Activated T-helper 1 cell treated with anti-CD3 and anti-CD28 coated beads, Interleukin-12 subunit alpha, Interleukin-12 subunit beta, Interleukin-2, Interleukin-4 antibody, amounts not matched to agents 30 ng/mL and 10 ng/mL and 1 ng/mL, durations not matched to agents 14 hours and 24 hours and 36 hours (primary cell): ENCODE measurements at regions of chr3 and their contacts with region 1.

Region 1: DNA sequence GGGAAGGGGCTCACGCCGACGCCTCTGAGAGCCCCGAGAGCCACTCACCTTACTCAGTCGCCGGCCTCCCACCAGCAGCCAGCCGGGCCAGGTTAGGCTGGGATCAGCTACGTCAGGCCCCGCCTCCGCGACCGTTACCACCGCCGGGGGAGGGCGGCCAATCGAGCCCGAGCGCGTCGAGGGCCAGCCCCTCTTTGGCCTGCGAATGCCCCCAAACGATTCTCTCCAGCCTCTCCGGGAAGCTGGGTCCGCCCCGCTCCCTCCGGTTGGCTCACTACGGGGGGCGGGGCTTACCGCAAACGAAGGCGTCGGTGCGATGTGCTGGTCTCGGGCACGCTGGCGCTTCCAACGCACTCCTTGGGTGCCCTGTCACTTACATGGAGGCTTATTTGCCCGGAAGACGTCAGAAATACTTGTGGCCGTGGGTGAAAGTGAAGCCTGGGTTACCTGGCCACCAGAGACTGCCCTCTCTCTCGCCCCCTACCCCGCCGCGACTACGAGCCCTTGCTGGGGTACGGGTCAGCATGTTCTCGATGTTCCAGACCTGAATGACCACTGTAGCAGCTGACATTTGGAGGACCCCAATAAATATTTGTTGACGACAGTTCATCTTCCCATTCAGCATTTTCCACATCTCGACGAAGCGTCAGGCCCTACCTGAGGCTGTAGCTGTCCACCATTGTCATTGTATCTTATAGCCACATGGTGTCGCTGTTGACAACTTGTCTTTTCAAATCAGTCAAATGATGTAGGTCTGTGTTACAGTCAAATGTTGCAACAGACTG is at the start of gene CEP70:
- DNase-seq: peak; percentile 79
- H3K4me3 Mint-ChIP-seq: peak within 1 kb of the TSS; percentile 87
- H3K27ac Mint-ChIP-seq: peak within 1 kb of the TSS; percentile 86
- H3K4me1 Mint-ChIP-seq: peaks cover 11% of the 10 kb centered on the region
- H3K27me3 Mint-ChIP-seq: peaks cover 3% of the 10 kb centered on the region
- total RNA-seq, gene CEP70: 2.4 and 3.1 TPM in 2 replicates

Region 2: DNA sequence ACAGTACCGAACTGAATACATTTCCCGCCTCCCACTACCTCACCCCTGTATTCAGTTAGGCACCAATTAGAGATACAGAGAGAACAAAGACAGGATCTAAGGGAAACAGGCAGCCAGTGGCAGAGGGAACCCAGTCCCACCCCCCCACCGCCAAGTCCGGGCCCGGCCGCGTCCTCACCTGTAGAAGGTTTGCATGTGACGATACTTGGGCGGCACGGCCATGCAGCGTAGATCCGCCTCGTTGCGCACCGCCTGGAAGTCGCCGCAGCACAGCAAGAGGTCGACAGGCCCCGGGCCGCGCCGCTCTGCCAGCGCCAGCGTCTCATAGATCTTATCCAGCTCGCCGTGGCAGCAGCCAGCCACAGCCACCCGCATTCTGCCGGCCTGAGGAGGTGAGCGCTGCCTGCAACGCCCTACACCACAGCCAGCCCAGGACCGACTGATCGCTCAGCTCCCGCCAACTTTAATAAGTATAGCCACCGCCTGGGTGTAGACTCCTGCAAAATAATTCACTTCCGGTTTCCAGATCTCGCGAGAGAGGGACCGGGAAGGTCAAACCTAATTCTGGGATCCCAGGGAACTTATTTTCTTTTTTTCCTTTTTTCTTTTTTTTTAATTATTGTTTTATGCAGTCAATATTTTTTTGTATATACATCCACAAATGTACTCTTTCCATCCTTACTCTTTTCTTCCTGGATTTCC is 419.8 kb before region 1 on chr3 and contains the start of gene DBR1:
- intact Hi-C with region 1: loop called (anchors 5 kb)
- DNase-seq: peak; percentile 68
- H3K4me3 Mint-ChIP-seq: peak within 1 kb of the TSS; percentile 98
- H3K27ac Mint-ChIP-seq: peak within 1 kb of the TSS; percentile 94
- H3K4me1 Mint-ChIP-seq: peaks cover 42% of the 10 kb centered on the region
- H3K27me3 Mint-ChIP-seq: peaks cover 7% of the 10 kb centered on the region
- total RNA-seq, gene DBR1: 25.7 and 31.0 TPM in 2 replicates

Region 3: DNA sequence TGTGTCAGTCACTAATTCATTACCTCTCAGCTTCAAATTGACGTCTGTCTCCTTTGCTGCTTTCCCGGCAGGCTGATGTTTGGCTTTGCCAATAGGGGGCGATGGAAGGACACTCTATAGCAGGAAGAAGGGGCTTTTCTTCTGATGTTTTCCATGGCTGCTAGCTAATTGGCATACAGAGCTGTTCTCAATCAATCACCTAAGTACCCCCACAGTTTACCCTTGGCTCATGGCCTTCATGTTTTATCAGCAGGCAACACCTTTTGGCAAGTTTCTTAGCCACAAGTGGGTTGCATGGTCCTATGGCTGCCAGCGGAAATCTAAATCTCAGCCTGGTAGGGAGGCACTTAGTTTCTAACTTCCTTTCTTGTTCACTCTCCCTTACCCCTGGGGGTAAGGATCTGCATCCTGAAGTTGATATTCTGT is 114.9 kb before region 1 on chr3:
- intact Hi-C with region 1: loop called (anchors 5 kb)
- DNase-seq: no peak
- H3K4me3 Mint-ChIP-seq: no peak overlapping the region
- H3K27ac Mint-ChIP-seq: no peak overlapping the region
- H3K4me1 Mint-ChIP-seq: no peaks in the 10 kb centered on the region
- H3K27me3 Mint-ChIP-seq: peaks cover 10% of the 10 kb centered on the region

Region 4: GRCh38 chr3:138608322-138609135 is 14.2 kb after region 1 on chr3 and contains the start of gene FAIM:
- intact Hi-C with region 1: loop called (anchors 1 kb)
- DNase-seq: peak; percentile 46
- H3K4me3 Mint-ChIP-seq: peak within 1 kb of the TSS; percentile 89
- H3K27ac Mint-ChIP-seq: peak within 1 kb of the TSS; percentile 92
- H3K4me1 Mint-ChIP-seq: peaks cover 11% of the 10 kb centered on the region
- H3K27me3 Mint-ChIP-seq: peaks cover 6% of the 10 kb centered on the region
- total RNA-seq, gene FAIM: 1.4 and 2.3 TPM in 2 replicates

Region 5: DNA sequence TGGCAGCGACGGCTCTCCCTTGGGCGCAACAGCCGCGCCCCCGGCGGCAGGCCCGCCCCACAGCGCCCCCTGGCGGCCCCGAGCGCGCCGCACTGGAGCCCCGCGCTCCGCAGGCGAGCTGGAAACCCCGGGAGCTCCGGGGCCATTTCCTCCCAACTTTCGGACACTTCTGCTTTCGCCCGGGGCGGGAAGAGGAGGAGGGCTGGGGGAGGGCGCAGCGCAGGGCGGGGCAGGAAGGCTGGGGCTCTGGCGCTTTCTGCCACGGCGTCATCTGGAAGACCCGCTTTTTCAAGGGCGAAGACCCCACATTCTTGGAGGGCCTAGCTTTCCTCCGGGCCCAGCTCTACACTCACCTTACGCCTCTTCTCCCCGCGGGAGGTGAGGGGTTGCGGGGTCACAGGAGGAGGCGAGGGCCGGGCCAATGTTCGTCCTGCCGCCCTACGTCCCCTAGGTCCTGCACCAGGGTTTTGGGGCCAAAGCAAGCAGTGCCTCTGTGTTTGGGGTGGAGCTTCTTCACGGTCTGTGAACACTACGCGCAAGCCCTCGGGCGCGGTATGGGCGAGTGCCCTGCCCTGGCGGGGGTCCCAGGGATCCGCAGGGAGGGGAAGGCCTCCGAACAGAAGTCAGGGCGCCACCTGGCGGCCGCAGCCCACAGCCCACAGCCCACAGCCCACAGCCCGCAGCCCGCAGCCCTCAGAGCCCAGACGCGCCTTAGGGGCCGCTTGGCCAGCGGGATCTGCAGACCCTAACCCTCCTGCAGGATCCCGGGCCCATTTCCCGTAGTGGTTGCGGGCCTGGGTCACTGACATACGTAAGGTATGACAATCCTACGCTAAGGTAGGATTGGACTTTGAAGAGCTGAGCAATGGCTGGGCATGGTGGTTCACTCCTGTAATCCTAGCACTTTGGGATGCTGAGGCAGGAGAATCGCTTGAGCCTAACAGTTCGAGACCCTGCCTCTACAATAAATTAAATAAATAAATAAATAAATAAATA is 321.5 kb after region 1 on chr3:
- intact Hi-C with region 1: loop called (anchors 1 kb)
- DNase-seq: peak; percentile 68
- H3K4me3 Mint-ChIP-seq: peak overlapping the region; percentile 86
- H3K27ac Mint-ChIP-seq: peak overlapping the region; percentile 71
- H3K4me1 Mint-ChIP-seq: peaks cover 6% of the 10 kb centered on the region
- H3K27me3 Mint-ChIP-seq: peaks cover 16% of the 10 kb centered on the region

Region 6: DNA sequence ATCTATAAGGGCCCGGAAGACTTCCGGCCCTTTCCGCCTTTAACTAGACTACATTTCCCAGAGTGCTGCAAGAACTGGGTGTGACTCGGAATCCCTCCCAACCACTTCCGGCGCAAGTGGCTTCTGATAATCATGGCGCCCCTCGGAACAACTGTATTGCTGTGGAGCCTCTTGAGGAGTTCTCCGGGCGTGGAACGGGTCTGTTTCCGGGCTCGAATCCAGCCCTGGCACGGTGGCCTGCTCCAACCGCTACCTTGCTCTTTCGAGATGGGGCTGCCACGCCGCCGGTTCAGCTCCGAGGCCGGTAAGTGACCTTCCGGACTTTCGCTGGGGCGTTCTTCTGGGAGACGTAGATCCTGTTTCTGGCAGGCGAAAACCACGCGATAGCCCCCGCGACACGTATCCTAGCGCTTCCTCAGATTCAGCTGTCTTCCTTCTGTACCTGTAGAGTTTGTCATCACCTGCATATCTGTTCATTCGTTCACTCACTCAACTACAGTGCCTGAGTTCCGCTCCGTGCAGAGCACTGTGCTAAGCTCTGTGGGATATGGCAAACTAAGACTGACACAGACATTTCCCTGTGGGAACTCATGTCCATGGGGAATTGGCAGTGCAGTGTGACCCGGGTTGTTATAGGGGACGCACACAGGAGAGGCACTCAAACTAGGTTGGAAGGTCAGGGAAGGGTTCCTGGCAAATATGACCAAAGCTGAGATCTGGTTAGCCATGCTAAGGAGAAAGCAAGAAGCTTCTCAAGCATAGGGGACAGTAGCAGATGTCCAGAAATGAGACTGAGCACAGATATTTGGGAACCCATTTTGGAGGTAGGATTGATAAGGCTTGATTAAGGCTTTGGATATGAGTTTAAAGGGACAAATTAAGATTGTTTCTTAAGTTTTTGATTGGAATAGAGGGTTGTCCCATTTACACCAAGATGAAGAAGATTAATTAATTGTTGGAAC is 749.8 kb after region 1 on chr3 and contains the start of gene MRPS22:
- intact Hi-C with region 1: loop called (anchors 5 kb)
- DNase-seq: peak; percentile 79
- H3K4me3 Mint-ChIP-seq: no peak within 1 kb of the TSS
- H3K27ac Mint-ChIP-seq: peak within 1 kb of the TSS; percentile 87
- H3K4me1 Mint-ChIP-seq: peaks cover 14% of the 10 kb centered on the region
- H3K27me3 Mint-ChIP-seq: peaks cover 3% of the 10 kb centered on the region
- total RNA-seq, gene MRPS22: 48.4 and 54.7 TPM in 2 replicates